Right ventricle myocardium inferior (tissue), 1 donor: ENCODE measurements at regions of chr17 and their contacts with region 1.

Region 1: DNA sequence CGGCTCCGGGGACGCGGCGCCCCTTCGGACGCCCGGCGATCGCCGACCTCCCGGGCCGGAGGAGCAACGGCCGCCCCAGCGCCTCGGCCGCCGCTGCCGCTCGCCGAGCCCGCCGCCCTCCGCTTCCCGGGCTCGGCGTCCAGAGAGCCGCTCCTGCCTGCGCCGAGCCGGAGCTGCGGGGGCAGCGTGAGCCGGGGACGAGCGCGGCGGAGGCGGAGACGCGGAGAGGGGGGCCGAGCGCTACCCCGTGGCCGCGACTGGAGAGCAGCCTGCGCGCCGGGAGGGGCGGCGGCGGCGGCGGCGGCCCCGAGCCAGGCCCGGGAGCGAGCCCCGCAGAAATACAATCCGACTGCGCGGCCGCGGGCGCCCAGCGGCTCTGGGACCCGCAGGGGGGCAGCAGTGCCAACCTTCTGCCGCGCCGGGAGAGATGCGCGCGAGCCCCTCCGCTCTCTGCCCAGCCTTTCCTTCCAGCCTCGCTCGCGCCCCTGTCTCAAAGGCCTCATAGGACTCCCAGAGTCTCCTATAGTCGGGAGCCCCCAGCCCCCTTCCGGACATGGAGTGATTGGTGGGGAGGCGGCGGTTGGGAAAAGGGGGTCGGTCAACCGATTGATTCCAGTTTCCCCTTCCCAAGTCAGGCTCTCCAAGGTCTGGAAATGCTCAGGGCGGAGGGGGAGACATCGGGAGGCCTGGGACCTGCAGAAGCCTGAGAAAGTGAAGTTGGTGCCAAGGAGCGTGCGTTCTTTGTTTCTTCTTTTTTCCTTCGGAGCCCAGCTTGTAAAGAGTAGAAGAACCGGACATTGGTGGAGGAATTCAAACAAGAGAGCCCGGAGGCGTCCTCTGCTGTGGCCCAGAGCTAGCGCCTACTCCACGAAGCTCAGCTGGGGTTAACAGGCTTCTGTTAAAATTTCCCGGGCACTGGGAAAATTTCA is 1.1 kb upstream of the SDK2 start:
- DNase-seq: no peak
- ATAC-seq: peak; percentile 81

Region 2: GRCh38 chr17:73446617-73447016 is 198.7 kb before region 1 on chr17:
- intact Hi-C with region 1: no loop called
- DNase-seq: no peak
- ATAC-seq: no peak

Region 3: GRCh38 chr17:73690676-73691075 is 45.4 kb after region 1 on chr17:
- intact Hi-C with region 1: no loop called
- DNase-seq: no peak
- ATAC-seq: no peak

Region 4: DNA sequence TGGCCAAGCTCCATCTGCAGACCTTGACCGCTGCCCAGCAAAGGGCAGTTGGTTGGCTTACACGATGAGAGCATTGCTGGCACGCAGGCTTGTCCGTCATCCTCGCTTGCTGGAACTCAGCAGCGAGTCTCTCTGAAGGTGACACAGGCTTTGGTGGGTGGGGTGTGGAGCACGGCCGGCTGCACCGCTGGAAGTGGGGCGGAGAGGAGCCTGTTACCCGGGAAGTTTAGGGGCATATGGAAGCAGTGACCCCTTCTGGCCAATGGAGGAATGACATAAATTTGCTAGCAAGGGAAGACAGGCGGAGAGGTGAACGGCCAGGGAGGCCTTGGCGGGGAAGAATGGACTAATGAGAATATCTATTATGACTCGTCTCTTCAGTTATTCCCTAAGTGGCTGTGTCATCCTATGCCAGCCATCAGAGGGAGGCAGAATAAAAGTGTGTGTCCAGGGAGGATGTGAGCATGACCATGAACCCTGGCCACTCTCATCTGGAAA is 64.8 kb after region 1 on chr17:
- intact Hi-C with region 1: loop called (anchors 5 kb)
- DNase-seq: peak; percentile 73
- ATAC-seq: peak; percentile 88